ENCODE measurements at regions of chr1 and their contacts with region 1.

Region 1: DNA sequence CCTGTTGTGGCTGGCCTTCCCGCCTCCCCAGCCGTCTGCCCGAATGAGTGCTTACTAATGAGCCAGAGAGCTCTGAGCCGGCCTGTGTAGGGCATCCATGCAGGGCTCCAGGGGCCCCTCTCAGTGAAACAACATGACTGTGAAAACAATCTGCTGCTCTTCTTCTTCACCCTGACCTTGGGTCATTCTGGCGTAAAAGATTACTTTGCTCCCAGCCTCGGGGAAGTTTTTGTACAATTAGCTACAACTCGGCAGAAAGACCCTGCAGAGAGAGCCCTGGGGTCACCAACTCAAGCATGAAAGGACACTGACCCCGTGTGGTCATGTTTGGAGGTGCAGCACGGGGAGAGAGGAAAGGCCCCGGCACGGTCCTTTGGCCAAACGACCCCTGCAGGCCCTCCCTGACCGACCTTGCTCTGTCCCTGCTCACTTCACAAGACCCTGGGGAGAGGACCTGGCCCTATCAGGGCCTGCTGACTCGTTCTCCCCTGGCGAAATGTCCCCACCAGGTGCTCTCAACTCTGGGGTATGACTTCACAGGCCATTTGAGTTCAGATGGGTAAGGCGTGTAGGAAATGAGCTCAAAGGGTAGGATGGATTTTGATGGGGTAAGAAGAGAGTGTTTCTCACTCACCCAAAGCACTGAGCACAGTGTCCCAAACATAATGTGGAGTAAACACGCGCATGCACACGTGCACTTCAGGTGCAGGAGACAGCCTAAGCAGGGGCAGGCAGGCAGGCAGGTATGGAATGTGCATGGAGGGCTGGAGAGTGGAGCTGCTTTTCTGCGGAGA is 22.9 kb upstream of the FAM20B start:
- DNase-seq: peak; percentile 84
- ATAC-seq: peak; percentile 84

Region 2: DNA sequence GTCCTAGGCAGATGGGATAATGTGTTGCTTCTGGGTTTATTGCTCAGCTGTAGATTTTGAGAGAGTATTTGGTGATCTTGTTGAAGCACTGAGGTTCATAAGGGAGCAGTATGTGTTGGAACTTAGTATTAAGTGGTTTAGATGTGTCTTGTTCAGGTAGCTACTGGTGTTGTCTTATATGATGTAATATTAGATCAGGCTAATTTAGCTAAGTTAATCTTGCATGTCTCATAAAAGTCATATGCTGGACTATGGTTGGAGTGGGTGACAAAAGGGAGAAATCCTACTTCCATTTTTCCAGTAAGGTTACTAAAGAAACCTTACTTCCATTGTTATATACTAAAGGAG is 702.4 kb before region 1 on chr1:
- intact Hi-C with region 1: loop called (anchors 5 kb)
- DNase-seq: no peak
- ATAC-seq: no peak

Region 3: DNA sequence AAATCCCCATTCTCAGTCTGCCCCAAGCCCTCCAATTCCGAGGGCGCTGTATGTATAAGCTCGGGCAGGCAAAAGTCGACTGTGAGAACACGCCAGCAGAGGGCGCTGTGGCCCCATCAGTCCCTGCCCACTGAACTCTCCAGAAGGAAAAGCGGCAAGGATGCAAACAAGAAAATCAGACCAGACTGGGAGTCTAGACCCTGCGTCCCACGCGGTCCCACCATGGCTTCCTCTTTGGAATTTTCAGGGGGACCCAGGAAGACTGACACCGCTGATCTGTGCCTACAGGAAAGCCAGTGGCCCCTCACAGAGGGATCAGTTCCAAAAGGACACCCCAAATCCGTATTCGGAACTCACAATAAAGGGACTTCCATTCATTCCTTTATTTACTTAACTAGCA is 470.4 kb before region 1 on chr1:
- intact Hi-C with region 1: loop called (anchors 2 kb)
- DNase-seq: peak; percentile 90
- ATAC-seq: peak; percentile 49

Region 4: GRCh38 chr1:178542560-178543356 is 460.0 kb before region 1 on chr1:
- intact Hi-C with region 1: loop called (anchors 2 kb)
- DNase-seq: peak; percentile 90
- ATAC-seq: peak; percentile 92

Region 5: DNA sequence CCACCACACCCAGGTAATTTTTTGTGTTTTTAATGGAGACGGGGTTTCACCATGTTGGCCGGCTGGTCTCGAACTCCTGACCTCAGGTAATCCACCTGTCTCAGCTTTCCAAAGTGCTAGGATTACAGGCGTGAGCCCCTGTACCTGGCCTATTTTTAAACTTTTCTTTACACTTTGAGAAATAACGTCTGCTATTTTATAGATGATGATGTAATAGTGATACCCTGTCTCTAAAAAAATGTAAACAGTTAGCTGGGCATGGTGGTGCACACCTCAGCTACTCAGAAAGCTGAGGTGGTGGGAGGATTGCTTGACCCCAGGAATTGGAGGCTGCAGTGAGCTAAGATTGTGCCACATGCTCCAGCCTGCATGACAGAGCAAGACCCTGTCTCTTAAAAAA is 229.8 kb before region 1 on chr1:
- intact Hi-C with region 1: loop called (anchors 2 kb)
- DNase-seq: no peak
- ATAC-seq: no peak

Region 6: GRCh38 chr1:178808529-178808928 is 194.2 kb before region 1 on chr1:
- intact Hi-C with region 1: loop called (anchors 1 kb)
- DNase-seq: no peak
- ATAC-seq: no peak

Measured in Right ventricle myocardium inferior (tissue), 1 donor.